ENCODE measurements at regions of chr20 and their contacts with region 1.

Region 1: DNA sequence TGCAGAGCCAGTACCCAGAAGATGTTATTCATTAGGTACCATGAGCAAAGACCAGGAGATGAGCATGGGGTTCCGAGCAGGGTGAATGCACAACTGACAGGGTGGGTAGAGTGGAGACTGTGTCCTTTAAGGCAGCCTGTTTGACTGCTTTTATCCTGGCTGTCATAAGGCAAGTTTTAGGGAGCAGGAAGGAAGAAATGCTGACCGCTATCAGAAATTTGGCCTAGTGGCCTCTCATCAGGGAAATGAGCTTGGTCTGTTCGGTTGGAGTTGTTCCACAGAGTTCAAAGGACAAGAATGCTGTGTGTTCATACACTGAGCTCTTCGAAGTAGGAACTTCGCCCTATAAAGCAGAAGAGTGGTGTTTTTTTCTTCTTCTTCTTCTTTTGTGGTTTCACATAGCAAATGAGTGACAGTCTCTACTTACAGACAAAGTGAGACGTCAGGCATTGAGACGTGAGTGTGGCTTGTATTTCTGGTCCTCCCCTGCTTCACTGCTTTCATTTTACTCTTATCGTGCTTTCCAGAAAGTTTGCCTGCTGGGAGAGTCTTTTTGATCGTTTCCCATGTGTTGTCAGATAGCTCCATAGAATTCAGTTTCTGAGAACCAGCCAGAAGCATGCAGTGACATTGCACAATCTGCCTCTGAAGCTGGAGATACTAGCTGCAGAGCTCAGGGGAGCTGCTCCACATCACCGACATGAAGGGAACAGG is at the start of gene CASS4:
- DNase-seq: peak in 8 of 10 donors; percentile 36 to 79 (median 64)
- ATAC-seq: peak; percentile 86 to 87
- H3K4me3 Mint-ChIP-seq: peak within 1 kb of the TSS; percentile 88 to 98 (median 94)
- H3K27ac Mint-ChIP-seq: peak within 1 kb of the TSS; percentile 94 to 99 (median 98)
- H3K4me1 Mint-ChIP-seq: peaks cover 26 to 63% (median 62%) of the 10 kb centered on the region in 4 donors
- H3K27me3 Mint-ChIP-seq: no peaks in the 10 kb centered on the region
- polyA plus RNA-seq, gene CASS4: 5.5 to 11.2 (median 7.1) TPM

Region 2: GRCh38 chr20:56350842-56351241 is 61.1 kb before region 1 on chr20:
- POLR2A ChIA-PET with region 1: no interaction called
- DNase-seq: no peak
- ATAC-seq: no peak
- H3K4me3 Mint-ChIP-seq: no peak overlapping the region
- H3K27ac Mint-ChIP-seq: no peak overlapping the region
- H3K4me1 Mint-ChIP-seq: peaks cover 0 to 5% (median 1%) of the 10 kb centered on the region in 4 donors
- H3K27me3 Mint-ChIP-seq: peaks cover 6 to 31% (median 14%) of the 10 kb centered on the region in 5 donors

Region 3: DNA sequence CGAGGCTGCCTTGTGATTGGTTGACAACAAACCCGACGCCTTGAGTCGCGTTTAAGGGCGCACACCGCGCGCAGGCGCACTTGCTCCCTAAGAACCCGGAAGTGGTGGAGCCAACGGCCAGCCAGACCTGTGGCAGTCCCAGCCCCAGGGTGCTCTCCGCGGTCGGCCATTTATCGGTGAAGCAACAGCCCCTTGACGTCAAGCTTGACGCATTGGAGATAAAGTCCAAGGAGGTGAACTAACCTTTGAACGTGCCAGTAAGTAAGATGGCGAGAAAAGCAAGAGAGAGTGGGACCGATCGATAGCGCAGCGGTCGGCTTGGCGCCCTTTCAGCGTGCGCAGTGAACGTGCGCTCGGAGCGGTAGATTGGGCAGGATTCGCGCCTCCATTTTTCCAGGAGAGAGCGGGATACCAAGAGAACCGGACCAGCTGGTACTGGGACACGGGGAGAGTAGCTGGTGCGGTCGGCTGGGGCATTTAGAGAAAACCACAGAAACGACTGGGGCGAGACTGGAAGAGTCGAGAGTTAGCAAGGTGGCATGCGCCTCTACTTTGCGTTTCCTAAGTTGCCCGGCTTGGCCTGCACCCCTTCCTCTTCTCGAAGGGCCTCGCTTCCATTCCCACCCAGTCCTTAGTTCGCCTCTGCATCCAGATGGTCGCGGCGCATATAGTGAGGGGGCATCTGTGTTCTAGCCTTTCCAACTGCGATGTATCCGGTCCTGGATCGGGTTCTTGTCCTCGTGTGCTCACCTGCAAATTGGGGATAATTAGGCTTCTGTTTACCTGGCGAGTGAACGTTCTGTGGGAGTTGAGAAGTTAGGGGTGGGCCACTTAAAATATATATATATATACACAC is 19.4 kb before region 1 on chr20 and contains the start of gene CSTF1:
- POLR2A ChIA-PET with region 1: interaction called, 20 read pairs
- DNase-seq: peak; percentile 97 to 99 (median 99)
- ATAC-seq: peak; percentile 90 to 91
- H3K4me3 Mint-ChIP-seq: no peak within 1 kb of the TSS
- H3K27ac Mint-ChIP-seq: peak within 1 kb of the TSS in 1 of 10 donors; percentile 90
- H3K4me1 Mint-ChIP-seq: peaks cover 16 to 32% (median 24%) of the 10 kb centered on the region in 4 donors
- H3K27me3 Mint-ChIP-seq: no peaks in the 10 kb centered on the region
- polyA plus RNA-seq, gene CSTF1: 27.2 to 33.3 (median 27.7) TPM

Region 4: GRCh38 chr20:56400090-56400542 is 11.8 kb before region 1 on chr20:
- POLR2A ChIA-PET with region 1: interaction called, 10 read pairs
- DNase-seq: peak; percentile 30 to 83 (median 66)
- ATAC-seq: peak; percentile 78 to 80
- H3K4me3 Mint-ChIP-seq: no peak overlapping the region
- H3K27ac Mint-ChIP-seq: peak overlapping the region in 7 of 10 donors; percentile 7 to 87 (median 59)
- H3K4me1 Mint-ChIP-seq: peaks cover 5 to 23% (median 15%) of the 10 kb centered on the region in 4 donors
- H3K27me3 Mint-ChIP-seq: no peaks in the 10 kb centered on the region

Region 5: GRCh38 chr20:56422076-56422823 is 10.3 kb after region 1 on chr20:
- POLR2A ChIA-PET with region 1: interaction called, 34 read pairs
- DNase-seq: no peak
- ATAC-seq: no peak
- H3K4me3 Mint-ChIP-seq: peak overlapping the region in 9 of 10 donors; percentile 37 to 75 (median 67)
- H3K27ac Mint-ChIP-seq: peak overlapping the region; percentile 86 to 99 (median 96)
- H3K4me1 Mint-ChIP-seq: peaks cover 39 to 79% (median 61%) of the 10 kb centered on the region in 4 donors
- H3K27me3 Mint-ChIP-seq: no peaks in the 10 kb centered on the region

Region 6: GRCh38 chr20:56429502-56429901 is 17.6 kb after region 1 on chr20:
- POLR2A ChIA-PET with region 1: interaction called, 19 read pairs
- DNase-seq: no peak
- ATAC-seq: peak; percentile 45 to 60
- H3K4me3 Mint-ChIP-seq: peak overlapping the region; percentile 81 to 96 (median 87)
- H3K27ac Mint-ChIP-seq: peak overlapping the region; percentile 92 to 98 (median 95)
- H3K4me1 Mint-ChIP-seq: peaks cover 42 to 83% (median 65%) of the 10 kb centered on the region in 4 donors
- H3K27me3 Mint-ChIP-seq: no peaks in the 10 kb centered on the region

Region 7: GRCh38 chr20:56439771-56440291 is 27.9 kb after region 1 on chr20:
- POLR2A ChIA-PET with region 1: interaction called, 16 read pairs
- DNase-seq: peak in 1 of 10 donors; percentile 24
- ATAC-seq: peak; percentile 14 to 39
- H3K4me3 Mint-ChIP-seq: peak overlapping the region; percentile 53 to 84 (median 73)
- H3K27ac Mint-ChIP-seq: peak overlapping the region; percentile 82 to 96 (median 92)
- H3K4me1 Mint-ChIP-seq: peaks cover 36 to 67% (median 59%) of the 10 kb centered on the region in 4 donors
- H3K27me3 Mint-ChIP-seq: no peaks in the 10 kb centered on the region

Region 8: GRCh38 chr20:56468316-56469082 is 56.6 kb after region 1 on chr20 and contains the start of gene RTF2:
- POLR2A ChIA-PET with region 1: interaction called, 19 read pairs
- DNase-seq: peak; percentile 94 to 99 (median 96)
- ATAC-seq: peak; percentile 96 to 97
- H3K4me3 Mint-ChIP-seq: peak within 1 kb of the TSS; percentile 96 to 100 (median 99)
- H3K27ac Mint-ChIP-seq: peak within 1 kb of the TSS; percentile 97 to 100 (median 100)
- H3K4me1 Mint-ChIP-seq: peaks cover 19 to 56% (median 45%) of the 10 kb centered on the region in 4 donors
- H3K27me3 Mint-ChIP-seq: no peaks in the 10 kb centered on the region
- polyA plus RNA-seq, gene RTF2: 121 to 147 (median 138) TPM

Region 9: GRCh38 chr20:56522311-56522710 is 110.4 kb after region 1 on chr20:
- POLR2A ChIA-PET with region 1: no interaction called
- DNase-seq: no peak
- ATAC-seq: no peak
- H3K4me3 Mint-ChIP-seq: no peak overlapping the region
- H3K27ac Mint-ChIP-seq: no peak overlapping the region
- H3K4me1 Mint-ChIP-seq: peaks cover 5 to 14% (median 7%) of the 10 kb centered on the region in 4 donors
- H3K27me3 Mint-ChIP-seq: no peaks in the 10 kb centered on the region

Measured in naive thymus-derived CD8-positive, alpha-beta T cell (primary cell).